ENCODE measurements at regions of chr5 and their contacts with region 1.

Region 1: GRCh38 chr5:81513982-81514381 is 120.0 kb upstream of the ACOT12 start:
- DNase-seq: no peak
- H3K4me3 Mint-ChIP-seq: no peak overlapping the region
- H3K27ac Mint-ChIP-seq: no peak overlapping the region
- H3K4me1 Mint-ChIP-seq: peaks cover 6% of the 10 kb centered on the region
- H3K27me3 Mint-ChIP-seq: no peaks in the 10 kb centered on the region

Region 2: DNA sequence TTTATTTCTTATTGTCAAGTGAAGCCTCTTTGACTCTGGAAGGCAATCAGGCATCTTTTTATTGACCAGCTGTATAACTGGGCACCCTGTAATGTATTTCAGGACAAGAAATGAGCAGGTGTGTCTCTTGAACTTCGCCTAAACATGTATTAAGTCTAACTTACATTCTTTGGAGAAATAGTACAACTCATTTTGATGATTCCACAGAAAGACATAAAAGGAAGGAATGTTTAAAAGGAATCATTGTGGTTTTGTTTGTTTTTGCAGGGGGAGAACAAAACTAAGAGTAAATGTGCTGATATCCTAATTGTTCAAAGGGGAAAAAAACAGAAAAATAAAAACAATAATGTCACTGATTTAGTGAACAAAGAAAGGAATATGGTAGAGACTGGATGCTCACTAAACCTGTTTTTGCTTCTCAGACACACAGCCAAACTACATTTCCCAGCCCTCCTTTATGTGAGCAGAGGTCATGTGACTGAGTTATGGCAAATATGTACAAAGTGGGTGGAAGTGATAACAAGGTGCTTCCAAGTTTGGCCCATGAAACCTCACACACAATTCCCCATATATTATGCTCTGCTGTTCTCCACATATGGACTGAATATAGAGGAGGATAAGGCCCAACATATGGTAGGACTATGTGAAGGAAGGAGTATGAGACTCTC is 30.5 kb after region 1 on chr5:
- intact Hi-C with region 1: no loop called
- DNase-seq: no peak
- H3K4me3 Mint-ChIP-seq: no peak overlapping the region
- H3K27ac Mint-ChIP-seq: no peak overlapping the region
- H3K4me1 Mint-ChIP-seq: peaks cover 13% of the 10 kb centered on the region
- H3K27me3 Mint-ChIP-seq: no peaks in the 10 kb centered on the region

Region 3: DNA sequence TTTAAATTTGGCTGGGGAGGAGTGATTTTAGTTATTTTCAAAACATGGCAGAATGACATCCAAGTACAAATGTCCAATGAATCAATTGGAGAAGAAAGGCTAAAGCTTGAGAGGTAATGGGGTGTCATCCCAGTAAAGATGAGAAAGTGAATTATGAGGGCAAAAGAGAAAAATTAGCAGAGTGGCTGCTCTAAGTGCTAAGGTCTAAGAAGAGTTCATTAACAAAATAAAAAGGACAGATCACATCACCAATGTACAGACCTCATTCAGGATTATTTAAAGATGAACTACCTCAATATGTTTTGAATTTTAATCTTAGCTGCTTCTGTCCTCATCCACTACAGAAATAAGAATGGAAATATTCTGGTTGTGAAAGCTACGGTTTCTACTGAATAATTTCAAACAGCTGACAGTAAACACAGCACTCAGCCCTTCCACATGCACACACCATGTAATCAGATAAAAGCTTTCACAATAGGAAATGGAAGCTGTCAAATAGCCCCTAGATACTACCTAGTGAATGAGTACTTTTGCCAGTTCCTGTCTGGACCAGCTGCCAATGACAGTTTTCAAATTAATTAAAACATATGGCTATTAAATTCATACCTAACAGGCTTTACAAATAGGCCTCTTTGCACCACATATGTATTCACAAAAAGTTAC is 65.4 kb after region 1 on chr5:
- intact Hi-C with region 1: loop called (anchors 5 kb)
- DNase-seq: no peak
- H3K4me3 Mint-ChIP-seq: no peak overlapping the region
- H3K27ac Mint-ChIP-seq: peak overlapping the region; percentile 2
- H3K4me1 Mint-ChIP-seq: peaks cover 29% of the 10 kb centered on the region
- H3K27me3 Mint-ChIP-seq: no peaks in the 10 kb centered on the region